ENCODE measurements at regions of chr20 and their contacts with region 1.

Region 1: GRCh38 chr20:2752567-2753460 is 47.6 kb downstream of the CPXM1 start:
- DNase-seq: peak; percentile 36 to 63 (median 53)
- ATAC-seq: peak; percentile 48
- H3K4me3 ChIP-seq: peak overlapping the region; percentile 64
- H3K4me3 Mint-ChIP-seq: peak overlapping the region; percentile 74 to 90 (median 86)
- H3K27ac ChIP-seq: no peak overlapping the region
- H3K27ac Mint-ChIP-seq: peak overlapping the region in 8 of 9 donors; percentile 17 to 85 (median 56)
- H3K4me1 ChIP-seq: peaks cover 12 to 18% of the 10 kb centered on the region in 2 donors
- H3K4me1 Mint-ChIP-seq: peaks cover 20 to 35% (median 27%) of the 10 kb centered on the region in 7 donors
- H3K27me3 ChIP-seq: no peaks in the 10 kb centered on the region
- H3K27me3 Mint-ChIP-seq: peaks cover 6 to 54% (median 9%) of the 10 kb centered on the region in 5 donors

Region 2: DNA sequence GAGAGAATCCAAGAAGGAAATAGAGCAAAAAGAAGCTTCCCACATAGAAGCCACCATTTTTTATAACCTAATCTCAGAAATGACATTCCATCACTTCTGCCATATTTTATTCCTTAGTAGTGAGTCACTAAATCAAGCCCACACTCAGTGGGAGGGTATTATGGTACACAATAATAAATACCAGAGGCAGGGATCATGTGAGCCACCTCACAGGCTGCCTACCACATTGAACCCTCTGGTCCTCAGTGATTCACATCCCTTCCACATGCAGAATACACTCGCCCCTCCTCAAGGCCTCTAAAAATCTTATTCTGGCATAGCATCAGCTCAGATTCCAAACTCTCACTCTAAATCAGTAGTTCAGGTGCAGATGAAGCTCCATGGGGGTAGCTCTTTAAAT is 167.0 kb before region 1 on chr20:
- CTCF ChIA-PET with region 1: no interaction called
- POLR2A ChIA-PET with region 1: no interaction called
- intact Hi-C with region 1: no loop called
- DNase-seq: no peak
- ATAC-seq: no peak
- H3K4me3 ChIP-seq: no peak overlapping the region
- H3K4me3 Mint-ChIP-seq: no peak overlapping the region
- H3K27ac ChIP-seq: no peak overlapping the region
- H3K27ac Mint-ChIP-seq: no peak overlapping the region
- H3K4me1 ChIP-seq: no peaks in the 10 kb centered on the region
- H3K4me1 Mint-ChIP-seq: no peaks in the 10 kb centered on the region
- H3K27me3 ChIP-seq: no peaks in the 10 kb centered on the region
- H3K27me3 Mint-ChIP-seq: peaks cover 13 to 34% (median 19%) of the 10 kb centered on the region in 5 donors

Region 3: DNA sequence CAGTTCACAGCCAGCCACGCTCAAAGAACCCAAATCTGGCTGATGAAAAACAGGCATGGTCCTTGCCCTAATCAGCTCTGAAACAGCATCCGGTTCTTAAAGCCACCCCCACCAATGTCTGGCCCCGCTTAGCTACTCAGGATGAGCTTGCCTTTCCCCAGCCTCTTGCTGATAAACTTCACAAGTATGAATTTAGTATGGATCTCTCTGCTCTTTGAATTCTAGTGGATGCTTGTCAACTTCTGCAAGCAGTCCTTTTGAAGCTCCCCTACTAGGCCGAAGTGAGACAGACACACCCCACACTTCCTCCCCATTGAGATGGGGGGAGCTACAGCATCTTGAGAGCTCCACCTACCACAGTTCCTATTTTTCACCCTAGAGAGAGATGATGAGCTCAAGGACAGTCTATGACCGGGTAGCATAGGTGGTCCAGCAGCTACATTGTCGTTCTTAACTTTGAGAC is 23.5 kb before region 1 on chr20:
- CTCF ChIA-PET with region 1: interaction called, 6 read pairs
- POLR2A ChIA-PET with region 1: interaction called, 10 read pairs
- intact Hi-C with region 1: no loop called
- DNase-seq: peak in 7 of 9 donors; percentile 50 to 72 (median 66)
- ATAC-seq: peak; percentile 95
- H3K4me3 ChIP-seq: peak overlapping the region; percentile 2
- H3K4me3 Mint-ChIP-seq: peak overlapping the region; percentile 55 to 87 (median 71)
- H3K27ac ChIP-seq: peak overlapping the region; percentile 62
- H3K27ac Mint-ChIP-seq: peak overlapping the region; percentile 71 to 96 (median 90)
- H3K4me1 ChIP-seq: peaks cover 20 to 33% of the 10 kb centered on the region in 2 donors
- H3K4me1 Mint-ChIP-seq: peaks cover 9 to 47% (median 36%) of the 10 kb centered on the region in 7 donors
- H3K27me3 ChIP-seq: no peaks in the 10 kb centered on the region
- H3K27me3 Mint-ChIP-seq: peaks cover 0 to 36% (median 0%) of the 10 kb centered on the region in 5 donors

Region 4: GRCh38 chr20:2771631-2772080 is 18.8 kb after region 1 on chr20:
- CTCF ChIA-PET with region 1: no interaction called
- POLR2A ChIA-PET with region 1: no interaction called
- intact Hi-C with region 1: no loop called
- DNase-seq: no peak
- ATAC-seq: no peak
- H3K4me3 ChIP-seq: no peak overlapping the region
- H3K4me3 Mint-ChIP-seq: no peak overlapping the region
- H3K27ac ChIP-seq: no peak overlapping the region
- H3K27ac Mint-ChIP-seq: no peak overlapping the region
- H3K4me1 ChIP-seq: no peaks in the 10 kb centered on the region
- H3K4me1 Mint-ChIP-seq: peaks cover 0 to 4% (median 0%) of the 10 kb centered on the region in 7 donors
- H3K27me3 ChIP-seq: no peaks in the 10 kb centered on the region
- H3K27me3 Mint-ChIP-seq: peaks cover 4 to 22% (median 15%) of the 10 kb centered on the region in 5 donors

Region 5: DNA sequence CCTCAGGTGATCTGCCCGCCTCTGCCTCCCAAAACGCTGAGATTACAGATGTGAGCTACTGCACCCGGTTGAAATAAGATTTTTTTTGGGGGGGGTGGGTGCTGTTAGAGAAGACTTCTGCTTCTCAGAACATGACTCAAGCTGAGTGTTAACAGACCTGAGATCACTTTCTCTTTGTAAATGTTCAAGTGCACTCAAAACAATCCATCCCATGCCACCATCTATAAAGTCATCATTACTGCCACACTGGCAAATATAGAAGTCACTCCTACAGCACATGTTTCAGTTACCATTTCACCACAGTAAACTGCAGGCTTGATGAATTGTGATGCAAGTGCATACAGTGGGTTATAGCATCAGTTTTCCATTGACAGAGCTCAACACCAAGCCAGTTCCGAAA is 96.7 kb after region 1 on chr20:
- CTCF ChIA-PET with region 1: no interaction called
- POLR2A ChIA-PET with region 1: no interaction called
- intact Hi-C with region 1: loop called in 1 of 2 experiments (anchors 1 kb)
- DNase-seq: no peak
- ATAC-seq: no peak
- H3K4me3 ChIP-seq: no peak overlapping the region
- H3K4me3 Mint-ChIP-seq: no peak overlapping the region
- H3K27ac ChIP-seq: no peak overlapping the region
- H3K27ac Mint-ChIP-seq: peak overlapping the region in 1 of 9 donors; percentile 18
- H3K4me1 ChIP-seq: peaks cover 0 to 10% of the 10 kb centered on the region in 2 donors
- H3K4me1 Mint-ChIP-seq: peaks cover 14 to 34% (median 27%) of the 10 kb centered on the region in 7 donors
- H3K27me3 ChIP-seq: no peaks in the 10 kb centered on the region
- H3K27me3 Mint-ChIP-seq: no peaks in the 10 kb centered on the region

Region 6: DNA sequence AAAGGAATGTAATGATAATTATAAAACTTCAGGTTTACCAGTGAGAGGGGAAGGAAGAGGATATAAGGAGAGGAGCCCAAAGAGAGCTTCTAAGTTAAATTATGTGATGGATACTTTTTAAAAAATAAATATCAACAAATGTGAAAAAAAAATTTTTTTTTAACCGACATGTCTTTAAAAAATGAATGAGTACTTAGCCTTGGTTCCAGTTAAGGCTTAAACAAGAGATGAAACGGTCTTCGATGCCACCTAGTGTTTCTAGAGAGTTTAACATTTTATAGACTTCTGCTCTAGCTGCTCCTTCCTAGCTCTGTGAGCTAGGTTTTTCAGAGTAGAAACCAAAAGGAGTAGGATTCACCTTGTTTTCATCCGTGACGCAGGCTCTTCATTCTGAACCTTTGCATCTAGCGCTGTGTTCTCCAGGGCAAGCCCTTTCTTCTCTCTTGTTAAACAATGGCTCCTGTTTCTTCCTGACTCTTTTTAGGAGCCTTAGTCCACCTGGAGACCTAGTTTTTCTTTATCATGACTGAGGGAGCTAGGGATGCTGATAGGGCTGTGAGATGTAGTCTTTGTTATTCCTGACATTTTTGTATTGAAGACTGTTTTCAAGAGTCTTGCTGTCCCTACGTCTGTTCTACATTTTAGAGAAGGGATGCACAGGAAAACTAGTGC is 248.2 kb after region 1 on chr20:
- CTCF ChIA-PET with region 1: no interaction called
- POLR2A ChIA-PET with region 1: no interaction called
- intact Hi-C with region 1: loop called (anchors 2 to 5 kb)
- DNase-seq: peak in 7 of 9 donors; percentile 11 to 66 (median 49)
- ATAC-seq: peak; percentile 88
- H3K4me3 ChIP-seq: no peak overlapping the region
- H3K4me3 Mint-ChIP-seq: no peak overlapping the region
- H3K27ac ChIP-seq: no peak overlapping the region
- H3K27ac Mint-ChIP-seq: peak overlapping the region in 1 of 9 donors; percentile 18
- H3K4me1 ChIP-seq: no peaks in the 10 kb centered on the region
- H3K4me1 Mint-ChIP-seq: peaks cover 0 to 2% (median 0%) of the 10 kb centered on the region in 7 donors
- H3K27me3 ChIP-seq: no peaks in the 10 kb centered on the region
- H3K27me3 Mint-ChIP-seq: no peaks in the 10 kb centered on the region